ENCODE measurements at regions of chr17 and their contacts with region 1.

Region 1: DNA sequence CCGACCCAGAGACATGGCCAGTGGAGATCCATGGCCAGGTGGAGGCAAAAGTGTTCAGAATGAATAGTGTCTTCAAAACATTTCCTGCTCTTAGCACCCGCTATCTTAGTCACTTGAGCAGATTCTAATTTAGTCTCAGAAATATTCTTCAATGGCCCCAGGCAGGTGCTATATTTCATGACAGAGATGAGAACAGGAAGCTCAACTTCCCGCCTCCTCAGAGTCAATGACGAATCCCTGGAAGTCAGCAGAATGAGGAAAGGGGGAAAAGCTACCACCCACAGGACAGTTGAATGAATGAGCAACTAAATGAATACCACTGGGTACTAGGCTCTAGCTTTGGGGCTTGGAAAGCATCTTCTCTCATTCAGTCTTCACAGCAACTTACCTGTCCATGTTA is 147.2 kb downstream of the ASIC2 start:
- DNase-seq: no peak

Region 2: GRCh38 chr17:33109336-33110072 is 36.4 kb before region 1 on chr17:
- intact Hi-C with region 1: loop called in 1 of 2 experiments (anchors 1 kb)
- DNase-seq: no peak

Region 3: GRCh38 chr17:33171931-33172330 is 26.0 kb after region 1 on chr17:
- intact Hi-C with region 1: loop called in 1 of 2 experiments (anchors 1 kb)
- DNase-seq: no peak

Region 4: GRCh38 chr17:33183487-33184026 is 37.6 kb after region 1 on chr17:
- intact Hi-C with region 1: no loop called
- DNase-seq: no peak

Measured in posterior vena cava (tissue), 2 donors.